Activated CD8-positive, alpha-beta memory T cell treated with anti-CD3 and anti-CD28 coated beads, Interleukin-2, amount 10 ng/mL, durations not matched to agents 7 days and 5 days (primary cell): ENCODE measurements at regions of chr3 and their contacts with region 1.

Region 1: GRCh38 chr3:94062431-94063404 is at the starts of genes DHFR2 and NSUN3:
- DNase-seq: peak; percentile 92
- ATAC-seq: peak; percentile 90
- H3K4me3 Mint-ChIP-seq: peak within 1 kb of the TSS; percentile 97
- H3K27ac Mint-ChIP-seq: peak within 1 kb of the TSS; percentile 100
- H3K4me1 Mint-ChIP-seq: peaks cover 44% of the 10 kb centered on the region
- H3K27me3 Mint-ChIP-seq: no peaks in the 10 kb centered on the region
- total RNA-seq, gene DHFR2: 7.0 to 11.8 TPM
- total RNA-seq, gene NSUN3: 15.0 to 15.3 TPM

Region 2: GRCh38 chr3:94011233-94011711 is 51.4 kb before region 1 on chr3:
- CTCF ChIA-PET with region 1: interaction called, 31 read pairs
- DNase-seq: no peak
- ATAC-seq: peak; percentile 84
- H3K4me3 Mint-ChIP-seq: peak overlapping the region; percentile 55
- H3K27ac Mint-ChIP-seq: peak overlapping the region; percentile 80
- H3K4me1 Mint-ChIP-seq: peaks cover 40% of the 10 kb centered on the region
- H3K27me3 Mint-ChIP-seq: no peaks in the 10 kb centered on the region